OCI-LY7 (cell line): ENCODE measurements at regions of chr18 and their contacts with region 1.

Region 1: GRCh38 chr18:28075501-28075900 is 101.4 kb downstream of the CDH2 start:
- DNase-seq: no peak
- H3K4me3 ChIP-seq: no peak overlapping the region
- H3K27ac ChIP-seq: no peak overlapping the region
- H3K4me1 ChIP-seq: peaks cover 11% of the 10 kb centered on the region
- CTCF ChIP-seq: no peak

Region 2: DNA sequence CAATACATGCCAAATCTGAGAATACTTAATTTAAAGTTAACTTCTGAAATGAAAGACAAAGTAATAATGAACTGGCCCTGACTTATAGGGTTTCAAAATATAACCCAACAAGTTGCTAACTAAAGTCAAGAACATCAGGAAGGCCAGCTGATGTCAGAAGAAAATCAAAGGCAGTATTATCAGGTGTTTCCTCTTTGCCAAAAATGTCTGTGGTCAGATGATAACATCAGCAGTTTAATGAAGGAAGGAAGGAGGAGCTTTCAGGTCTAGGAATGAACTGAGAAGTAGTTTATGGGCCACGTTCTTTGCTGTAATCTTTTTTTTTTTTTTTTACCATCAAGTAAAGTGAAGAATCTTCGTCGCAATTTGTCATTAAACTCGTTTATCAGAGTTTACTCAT is 60.6 kb after region 1 on chr18:
- CTCF ChIA-PET with region 1: no interaction called
- POLR2A ChIA-PET with region 1: no interaction called
- intact Hi-C with region 1: loop called (anchors 10 kb)
- DNase-seq: no peak
- H3K4me3 ChIP-seq: no peak overlapping the region
- H3K27ac ChIP-seq: no peak overlapping the region
- H3K4me1 ChIP-seq: no peaks in the 10 kb centered on the region
- CTCF ChIP-seq: no peak